ENCODE measurements at regions of chr1 and their contacts with region 1.

Region 1: DNA sequence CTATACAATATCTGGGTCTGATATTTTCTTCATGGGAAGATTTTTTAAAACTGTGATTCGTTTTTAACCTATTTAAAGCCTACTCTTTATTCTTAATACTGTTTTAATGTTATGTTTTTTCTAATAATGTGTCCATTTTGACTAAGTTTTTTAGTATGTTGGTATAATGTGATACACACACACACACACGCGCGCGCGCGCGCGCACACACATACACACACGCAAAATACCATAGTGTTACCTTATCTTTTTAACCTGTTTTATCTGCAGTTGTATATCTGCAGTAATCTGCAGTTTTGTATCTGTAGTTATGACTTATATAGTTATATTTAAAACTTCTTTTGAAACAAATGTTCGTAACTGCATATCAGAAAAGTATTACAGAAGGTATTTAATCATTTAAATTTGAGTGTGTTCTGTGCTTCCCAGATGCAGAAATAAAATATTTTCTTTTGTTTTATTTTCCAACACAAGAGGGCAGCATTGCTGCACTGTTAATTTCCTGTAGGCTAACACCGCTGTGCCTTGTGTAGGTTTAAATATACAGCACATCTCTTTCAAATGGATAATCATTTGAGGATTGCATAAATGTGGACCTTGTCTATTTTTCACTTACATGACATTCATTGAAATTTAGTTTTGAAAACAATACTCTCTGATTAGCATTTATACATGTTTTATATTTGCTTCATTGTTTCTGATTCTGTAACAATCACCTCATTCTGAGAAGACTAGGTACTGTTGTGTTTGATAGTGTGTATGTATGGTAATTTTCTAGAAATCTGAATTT is 166.1 kb downstream of the PDE4B start:
- DNase-seq: peak in 4 of 5 donors; percentile 55 to 73 (median 63)
- H3K4me3 ChIP-seq: no peak overlapping the region
- H3K4me3 Mint-ChIP-seq: no peak overlapping the region
- H3K27ac ChIP-seq: no peak overlapping the region
- H3K27ac Mint-ChIP-seq: no peak overlapping the region
- H3K4me1 ChIP-seq: no peaks in the 10 kb centered on the region
- H3K4me1 Mint-ChIP-seq: no peaks in the 10 kb centered on the region
- H3K27me3 ChIP-seq: no peaks in the 10 kb centered on the region
- H3K27me3 Mint-ChIP-seq: peaks cover 2 to 5% of the 10 kb centered on the region in 2 donors

Region 2: DNA sequence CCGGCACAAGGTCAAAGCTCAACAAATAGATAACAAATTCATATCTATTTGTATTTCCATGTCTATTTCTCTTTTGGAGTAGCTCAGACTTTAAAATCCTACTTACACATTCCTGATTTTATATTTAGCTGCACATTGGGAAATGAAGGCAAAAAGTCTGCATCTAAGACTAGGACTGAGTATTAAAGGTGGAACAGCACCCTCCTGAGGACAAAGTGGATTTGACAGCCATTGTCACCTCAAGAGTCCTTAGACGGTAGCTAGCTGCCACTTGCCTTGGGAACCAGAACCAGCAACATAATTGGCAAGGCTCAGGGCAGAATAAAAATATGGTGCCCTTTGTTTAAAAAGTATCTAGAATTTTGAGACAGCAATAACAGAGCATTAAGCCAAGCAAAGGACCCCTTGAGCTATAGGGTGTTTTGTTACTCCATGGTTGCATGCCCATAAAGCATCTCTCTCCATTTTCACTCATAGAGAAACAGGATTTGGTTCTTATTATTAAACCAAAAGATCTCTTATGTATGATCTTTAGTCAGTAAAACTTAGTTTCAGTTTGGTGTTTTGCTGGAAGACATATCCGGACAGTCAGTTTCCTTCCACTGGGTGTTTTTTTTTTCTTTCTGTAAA is 545.2 kb after region 1 on chr1:
- CTCF ChIA-PET with region 1: interaction called, 3 read pairs
- POLR2A ChIA-PET with region 1: no interaction called
- intact Hi-C with region 1: loop called (anchors 2 kb)
- DNase-seq: peak in 4 of 5 donors; percentile 2 to 16 (median 6)
- H3K4me3 ChIP-seq: no peak overlapping the region
- H3K4me3 Mint-ChIP-seq: no peak overlapping the region
- H3K27ac ChIP-seq: no peak overlapping the region
- H3K27ac Mint-ChIP-seq: no peak overlapping the region
- H3K4me1 ChIP-seq: no peaks in the 10 kb centered on the region
- H3K4me1 Mint-ChIP-seq: no peaks in the 10 kb centered on the region
- H3K27me3 ChIP-seq: peaks cover 5% of the 10 kb centered on the region
- H3K27me3 Mint-ChIP-seq: peaks cover 8 to 23% of the 10 kb centered on the region in 2 donors

Measured in CD4-positive, alpha-beta memory T cell (primary cell).